ENCODE measurements at regions of chrX and their contacts with region 1.

Region 1: GRCh38 chrX:28498658-28499057 is 88.6 kb upstream of the IL1RAPL1 start:
- DNase-seq: no peak
- H3K4me3 ChIP-seq: no peak overlapping the region
- H3K27ac ChIP-seq: peak overlapping the region; percentile 57
- H3K27me3 ChIP-seq: no peaks in the 10 kb centered on the region
- CTCF ChIP-seq: no peak

Region 2: DNA sequence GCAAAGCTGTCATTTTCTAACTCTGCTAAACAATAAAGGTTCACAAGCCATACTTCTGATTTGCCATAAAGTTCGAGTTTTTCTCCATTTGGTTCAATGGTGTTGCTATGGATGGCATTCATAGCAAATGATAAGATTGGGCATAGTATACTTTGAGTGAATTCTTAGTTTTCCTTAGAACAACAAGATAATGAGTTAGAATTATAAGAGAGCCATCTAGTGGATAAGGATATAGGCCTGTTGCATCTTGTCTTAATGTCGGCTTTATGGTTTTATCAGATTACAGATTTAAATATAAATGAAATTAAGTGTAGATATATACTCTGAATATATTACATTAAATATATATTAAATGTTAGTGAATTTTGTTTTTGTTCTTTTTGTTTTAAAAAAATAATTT is 733.1 kb after region 1 on chrX:
- CTCF ChIA-PET with region 1: interaction called, 11 read pairs
- POLR2A ChIA-PET with region 1: no interaction called
- DNase-seq: no peak
- H3K4me3 ChIP-seq: no peak overlapping the region
- H3K27ac ChIP-seq: no peak overlapping the region
- H3K27me3 ChIP-seq: no peaks in the 10 kb centered on the region
- CTCF ChIP-seq: peak; percentile 52